Common myeloid progenitor, CD34-positive (primary cell): ENCODE measurements at regions of chr15 and their contacts with region 1.

Region 1: DNA sequence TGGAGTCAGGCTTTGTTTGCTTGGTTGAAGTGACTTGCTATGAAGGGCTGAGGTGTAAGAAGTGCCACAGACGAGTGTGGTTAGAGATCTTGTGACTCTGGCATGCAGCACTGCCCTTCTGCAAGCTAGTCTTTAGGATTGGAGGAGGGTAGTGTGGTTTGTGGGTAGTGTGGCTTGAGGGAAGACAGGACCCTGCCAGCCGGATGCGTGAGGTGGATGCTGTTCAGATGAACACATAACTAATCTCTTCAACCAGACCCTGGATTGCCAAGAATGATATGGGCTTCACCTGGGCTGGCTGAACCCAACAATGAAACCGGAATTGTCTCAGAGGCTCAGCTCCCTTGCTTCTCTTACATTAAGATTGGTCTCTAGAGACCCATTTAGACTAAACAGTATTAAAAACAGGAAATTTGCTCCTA is 32.7 kb downstream of the STARD9 start:
- DNase-seq: peak; percentile 98 to 100 (median 100)
- H3K4me3 ChIP-seq: peak overlapping the region in 4 of 7 experiments; percentile 3 to 54 (median 22)
- H3K27ac ChIP-seq: peak overlapping the region; percentile 55 to 62
- H3K4me1 ChIP-seq: peaks cover 38 to 96% (median 85%) of the 10 kb centered on the region in 4 experiments
- H3K27me3 ChIP-seq: no peaks in the 10 kb centered on the region

Region 2: GRCh38 chr15:42474827-42475226 is 133.3 kb before region 1 on chr15:
- CTCF ChIA-PET with region 1: no interaction called
- POLR2A ChIA-PET with region 1: no interaction called
- DNase-seq: peak; percentile 35 to 78 (median 68)
- H3K4me3 ChIP-seq: no peak overlapping the region
- H3K27ac ChIP-seq: peak overlapping the region in 1 of 2 experiments; percentile 46
- H3K4me1 ChIP-seq: peaks cover 0 to 12% (median 5%) of the 10 kb centered on the region in 4 experiments
- H3K27me3 ChIP-seq: no peaks in the 10 kb centered on the region

Region 3: GRCh38 chr15:42528970-42529369 is 79.2 kb before region 1 on chr15:
- CTCF ChIA-PET with region 1: no interaction called
- POLR2A ChIA-PET with region 1: no interaction called
- DNase-seq: no peak
- H3K4me3 ChIP-seq: no peak overlapping the region
- H3K27ac ChIP-seq: no peak overlapping the region
- H3K4me1 ChIP-seq: no peaks in the 10 kb centered on the region
- H3K27me3 ChIP-seq: no peaks in the 10 kb centered on the region

Region 4: GRCh38 chr15:42575188-42576039 is 32.7 kb before region 1 on chr15 and contains the start of gene STARD9:
- CTCF ChIA-PET with region 1: interaction called, 46 read pairs
- POLR2A ChIA-PET with region 1: interaction called, 8 read pairs
- DNase-seq: peak; percentile 96 to 99 (median 98)
- H3K4me3 ChIP-seq: peak within 1 kb of the TSS; percentile 67 to 91 (median 83)
- H3K27ac ChIP-seq: peak within 1 kb of the TSS in 1 of 2 experiments; percentile 64
- H3K4me1 ChIP-seq: peaks cover 10 to 51% (median 38%) of the 10 kb centered on the region in 4 experiments
- H3K27me3 ChIP-seq: no peaks in the 10 kb centered on the region

Region 5: GRCh38 chr15:42581272-42581730 is 26.8 kb before region 1 on chr15:
- CTCF ChIA-PET with region 1: interaction called, 46 read pairs
- POLR2A ChIA-PET with region 1: interaction called, 8 read pairs
- DNase-seq: peak; percentile 79 to 92 (median 88)
- H3K4me3 ChIP-seq: peak overlapping the region; percentile 56 to 86 (median 68)
- H3K27ac ChIP-seq: peak overlapping the region in 1 of 2 experiments; percentile 20
- H3K4me1 ChIP-seq: peaks cover 25 to 76% (median 61%) of the 10 kb centered on the region in 4 experiments
- H3K27me3 ChIP-seq: no peaks in the 10 kb centered on the region

Region 6: GRCh38 chr15:42591238-42591934 is 16.7 kb before region 1 on chr15:
- CTCF ChIA-PET with region 1: interaction called, 46 read pairs
- POLR2A ChIA-PET with region 1: interaction called, 6 read pairs
- DNase-seq: peak in 2 of 3 donors; percentile 32 to 41
- H3K4me3 ChIP-seq: no peak overlapping the region
- H3K27ac ChIP-seq: no peak overlapping the region
- H3K4me1 ChIP-seq: peaks cover 11 to 31% (median 18%) of the 10 kb centered on the region in 4 experiments
- H3K27me3 ChIP-seq: no peaks in the 10 kb centered on the region

Region 7: GRCh38 chr15:42695527-42696071 is 87.5 kb after region 1 on chr15:
- CTCF ChIA-PET with region 1: no interaction called
- POLR2A ChIA-PET with region 1: no interaction called
- DNase-seq: no peak
- H3K4me3 ChIP-seq: no peak overlapping the region
- H3K27ac ChIP-seq: no peak overlapping the region
- H3K4me1 ChIP-seq: peaks cover 0 to 6% (median 0%) of the 10 kb centered on the region in 4 experiments
- H3K27me3 ChIP-seq: no peaks in the 10 kb centered on the region